Activated CD4-positive, alpha-beta T cell treated with anti-CD3 and anti-CD28 coated beads, Interleukin-2, amount 10 ng/mL, durations not matched to agents 24 days and 14 days (primary cell): ENCODE measurements at regions of chr17 and their contacts with region 1.

Region 1: DNA sequence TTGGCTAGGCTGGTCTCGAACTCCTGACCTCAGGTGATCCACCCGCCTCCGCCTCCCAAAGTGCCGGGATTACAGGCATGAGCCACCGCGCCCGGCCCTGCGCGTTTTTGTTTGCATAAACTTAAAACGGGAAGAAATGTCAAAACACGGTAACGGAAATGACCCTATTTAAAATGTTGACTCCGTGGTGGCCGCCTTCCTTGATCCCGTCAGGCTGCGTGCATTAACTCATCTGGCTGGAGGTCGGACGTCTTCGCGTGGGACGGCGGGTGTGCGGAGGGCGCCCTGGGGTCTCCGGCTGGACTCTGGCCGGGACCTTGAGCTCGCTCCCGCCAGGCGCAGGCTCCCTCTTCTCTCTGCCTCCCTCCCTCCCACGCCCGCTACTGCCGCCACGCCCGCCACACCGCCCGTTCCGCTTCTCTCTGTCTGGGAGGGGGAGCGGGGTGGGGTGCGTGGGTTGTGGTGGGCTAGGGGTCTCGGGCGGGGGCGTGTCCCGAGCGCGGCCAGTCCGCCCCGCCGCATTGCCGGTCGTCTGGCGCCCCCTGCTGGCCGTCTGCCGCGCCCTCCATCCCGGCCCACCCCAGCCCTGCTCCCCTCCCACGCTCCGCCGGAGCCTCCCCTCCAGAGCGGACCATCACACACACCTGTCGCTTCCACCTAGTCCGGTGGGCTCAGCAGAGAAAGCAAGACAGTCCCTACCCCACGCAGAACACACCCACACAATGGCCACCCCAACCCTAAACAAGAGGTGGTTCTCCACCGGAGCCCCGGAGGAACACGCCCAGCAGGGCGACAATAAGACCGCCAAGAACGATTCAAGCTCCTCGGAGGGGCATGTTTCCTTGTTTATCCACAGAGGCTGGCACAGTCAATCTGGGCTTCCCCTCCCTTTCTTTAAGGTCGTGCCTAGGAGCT is 1.2 kb upstream of the CCDC42 start:
- DNase-seq: peak; percentile 93
- H3K4me3 Mint-ChIP-seq: peak overlapping the region; percentile 87
- H3K27ac Mint-ChIP-seq: peak overlapping the region; percentile 80
- H3K4me1 Mint-ChIP-seq: peaks cover 9% of the 10 kb centered on the region
- H3K27me3 Mint-ChIP-seq: peaks cover 17% of the 10 kb centered on the region

Region 2: GRCh38 chr17:8383143-8383822 is 362.6 kb before region 1 on chr17 and contains the start of gene RPL26:
- intact Hi-C with region 1: loop called (anchors 1 kb)
- DNase-seq: peak; percentile 98
- H3K4me3 Mint-ChIP-seq: peak within 1 kb of the TSS; percentile 99
- H3K27ac Mint-ChIP-seq: peak within 1 kb of the TSS; percentile 95
- H3K4me1 Mint-ChIP-seq: peaks cover 40% of the 10 kb centered on the region
- H3K27me3 Mint-ChIP-seq: no peaks in the 10 kb centered on the region
- total RNA-seq, gene RPL26: 2,460 and 2,469 TPM in 2 replicates

Region 3: GRCh38 chr17:8409966-8410864 is 335.6 kb before region 1 on chr17:
- intact Hi-C with region 1: loop called (anchors 1 kb)
- DNase-seq: peak; percentile 93
- H3K4me3 Mint-ChIP-seq: no peak overlapping the region
- H3K27ac Mint-ChIP-seq: peak overlapping the region; percentile 2
- H3K4me1 Mint-ChIP-seq: peaks cover 18% of the 10 kb centered on the region
- H3K27me3 Mint-ChIP-seq: peaks cover 27% of the 10 kb centered on the region

Region 4: DNA sequence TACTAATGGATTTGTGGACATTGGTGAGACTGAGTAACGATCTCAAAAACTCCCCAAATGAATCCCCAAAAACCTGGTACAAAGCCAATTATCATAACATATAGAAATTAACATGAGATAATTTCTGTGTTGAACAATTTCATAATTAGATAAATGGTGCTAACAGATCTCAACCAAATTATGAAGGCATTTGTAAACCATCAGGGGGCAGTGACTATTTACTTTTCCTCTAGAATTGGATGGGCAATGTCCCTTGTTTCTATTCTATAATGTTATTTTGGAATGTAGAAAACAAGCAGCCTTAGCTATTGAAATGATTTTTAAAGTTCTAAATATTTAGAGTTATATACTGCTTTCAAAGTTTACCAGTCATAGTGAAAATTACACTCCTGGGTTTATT is 173.1 kb before region 1 on chr17:
- intact Hi-C with region 1: loop called (anchors 5 kb)
- DNase-seq: no peak
- H3K4me3 Mint-ChIP-seq: no peak overlapping the region
- H3K27ac Mint-ChIP-seq: no peak overlapping the region
- H3K4me1 Mint-ChIP-seq: no peaks in the 10 kb centered on the region
- H3K27me3 Mint-ChIP-seq: peaks cover 2% of the 10 kb centered on the region

Region 5: DNA sequence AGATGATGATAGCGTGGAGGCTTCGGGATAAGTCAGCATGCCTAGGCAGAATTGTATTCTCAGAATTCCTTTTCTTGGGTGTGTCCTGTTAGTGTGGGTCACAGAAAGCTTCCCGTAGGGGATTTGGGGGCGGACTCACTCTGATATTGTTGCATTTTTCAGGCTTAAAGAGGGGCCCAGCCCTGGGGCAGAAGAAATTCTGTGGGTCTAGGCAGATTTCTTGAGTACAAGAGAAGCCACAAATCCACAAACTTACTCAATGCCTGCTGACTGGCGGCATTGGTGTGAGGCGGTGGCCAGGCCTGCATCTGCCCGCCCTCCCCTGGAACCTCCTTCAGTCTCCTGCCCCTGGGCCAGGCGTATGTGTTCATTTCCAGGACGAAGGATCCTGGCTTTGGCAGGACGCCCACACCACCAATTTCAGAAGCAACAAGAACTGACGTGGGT is 18.8 kb before region 1 on chr17:
- intact Hi-C with region 1: no loop called
- DNase-seq: no peak
- H3K4me3 Mint-ChIP-seq: no peak overlapping the region
- H3K27ac Mint-ChIP-seq: no peak overlapping the region
- H3K4me1 Mint-ChIP-seq: no peaks in the 10 kb centered on the region
- H3K27me3 Mint-ChIP-seq: peaks cover 2% of the 10 kb centered on the region

Region 6: DNA sequence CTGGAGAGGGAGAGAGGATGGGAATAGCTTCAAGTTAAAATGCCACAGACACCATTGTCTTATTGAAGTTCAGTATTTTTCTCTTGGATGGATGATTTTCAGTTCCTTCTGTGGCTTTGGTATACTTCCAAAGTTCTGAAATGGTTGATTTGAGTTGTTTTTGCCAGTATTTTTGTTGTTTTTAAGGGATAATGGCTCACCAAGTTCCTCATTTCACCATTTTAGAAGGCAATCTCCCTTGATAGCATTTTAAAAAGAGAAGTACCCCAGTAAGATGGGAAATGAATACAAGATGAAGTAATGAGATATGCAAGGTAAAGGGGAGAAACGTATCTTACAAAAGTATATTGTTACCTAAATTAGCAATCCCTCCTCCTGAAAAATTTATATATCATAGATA is 31.0 kb after region 1 on chr17:
- intact Hi-C with region 1: no loop called
- DNase-seq: no peak
- H3K4me3 Mint-ChIP-seq: no peak overlapping the region
- H3K27ac Mint-ChIP-seq: no peak overlapping the region
- H3K4me1 Mint-ChIP-seq: no peaks in the 10 kb centered on the region
- H3K27me3 Mint-ChIP-seq: peaks cover 41% of the 10 kb centered on the region